Adrenal gland (tissue), 19 donors: ENCODE measurements at regions of chr2 and their contacts with region 1.

Region 1: GRCh38 chr2:207746131-207746530 is 23.6 kb downstream of the FZD5 start:
- DNase-seq: peak; percentile 53 to 78 (median 67)
- H3K4me3 ChIP-seq: no peak overlapping the region
- H3K27ac ChIP-seq: no peak overlapping the region
- H3K4me1 ChIP-seq: peaks cover 0 to 6% of the 10 kb centered on the region in 2 donors
- H3K27me3 ChIP-seq: no peaks in the 10 kb centered on the region
- CTCF ChIP-seq: peak; percentile 77 to 95 (median 92)
- POLR2A ChIP-seq: no peak

Region 2: DNA sequence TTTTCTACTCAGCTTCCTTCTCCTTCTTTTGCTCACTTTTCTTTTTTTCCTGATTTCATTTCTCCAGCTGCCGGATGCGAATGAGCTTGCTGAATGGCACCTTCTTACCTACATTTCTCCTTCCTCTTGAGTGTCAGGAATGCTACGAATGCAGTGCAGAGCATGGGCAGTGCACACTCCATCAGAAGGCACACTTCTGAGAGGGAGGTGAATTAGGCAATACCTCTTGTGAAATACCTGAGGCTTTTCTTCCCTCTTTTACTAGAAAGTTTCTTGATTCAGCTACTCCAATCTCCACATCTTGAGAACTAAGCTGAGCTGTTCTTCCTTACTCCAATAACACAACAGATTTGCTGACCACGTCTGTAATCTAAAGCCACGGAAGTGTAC is 228.1 kb after region 1 on chr2:
- intact Hi-C with region 1: loop called in 1 of 2 experiments (anchors 10 kb)
- DNase-seq: no peak
- H3K4me3 ChIP-seq: no peak overlapping the region
- H3K27ac ChIP-seq: no peak overlapping the region
- H3K4me1 ChIP-seq: peaks cover 0 to 15% of the 10 kb centered on the region in 2 donors
- H3K27me3 ChIP-seq: no peaks in the 10 kb centered on the region
- CTCF ChIP-seq: no peak
- POLR2A ChIP-seq: no peak

Region 3: GRCh38 chr2:208040199-208041171 is 294.4 kb after region 1 on chr2:
- intact Hi-C with region 1: loop called in 1 of 2 experiments (anchors 2 kb)
- DNase-seq: peak; percentile 67 to 90 (median 80)
- H3K4me3 ChIP-seq: no peak overlapping the region
- H3K27ac ChIP-seq: peak overlapping the region in 2 of 5 donors; percentile 55 to 61
- H3K4me1 ChIP-seq: peaks cover 3 to 5% of the 10 kb centered on the region in 2 donors
- H3K27me3 ChIP-seq: no peaks in the 10 kb centered on the region
- CTCF ChIP-seq: peak; percentile 53 to 86 (median 80)
- POLR2A ChIP-seq: no peak

Region 4: GRCh38 chr2:208062113-208062512 is 316.0 kb after region 1 on chr2:
- intact Hi-C with region 1: loop called in 1 of 2 experiments (anchors 5 kb)
- DNase-seq: peak in 1 of 7 donors; percentile 47
- H3K4me3 ChIP-seq: no peak overlapping the region
- H3K27ac ChIP-seq: no peak overlapping the region
- H3K4me1 ChIP-seq: no peaks in the 10 kb centered on the region
- H3K27me3 ChIP-seq: no peaks in the 10 kb centered on the region
- CTCF ChIP-seq: peak; percentile 14 to 38 (median 30)
- POLR2A ChIP-seq: no peak